ENCODE measurements at regions of chr17 and their contacts with region 1.

Region 1: GRCh38 chr17:77957857-77958715 is at the start of gene TNRC6C:
- DNase-seq: peak; percentile 100
- ATAC-seq: peak; percentile 88
- H3K4me3 Mint-ChIP-seq: peak within 1 kb of the TSS; percentile 92
- H3K27ac Mint-ChIP-seq: peak within 1 kb of the TSS; percentile 85
- H3K4me1 Mint-ChIP-seq: peaks cover 38% of the 10 kb centered on the region
- H3K27me3 Mint-ChIP-seq: peaks cover 31% of the 10 kb centered on the region
- total RNA-seq, gene TNRC6C: 33.3 to 36.2 TPM

Region 2: GRCh38 chr17:77666881-77667395 is 291.1 kb before region 1 on chr17:
- CTCF ChIA-PET with region 1: interaction called, 3 read pairs
- POLR2A ChIA-PET with region 1: interaction called, 11 read pairs
- DNase-seq: peak; percentile 93
- ATAC-seq: peak; percentile 94
- H3K4me3 Mint-ChIP-seq: peak overlapping the region; percentile 82
- H3K27ac Mint-ChIP-seq: peak overlapping the region; percentile 97
- H3K4me1 Mint-ChIP-seq: peaks cover 51% of the 10 kb centered on the region
- H3K27me3 Mint-ChIP-seq: peaks cover 4% of the 10 kb centered on the region

Region 3: GRCh38 chr17:77783991-77784820 is 173.9 kb before region 1 on chr17:
- CTCF ChIA-PET with region 1: no interaction called
- POLR2A ChIA-PET with region 1: interaction called, 11 read pairs
- DNase-seq: peak; percentile 61
- ATAC-seq: peak; percentile 91
- H3K4me3 Mint-ChIP-seq: peak overlapping the region; percentile 27
- H3K27ac Mint-ChIP-seq: peak overlapping the region; percentile 80
- H3K4me1 Mint-ChIP-seq: peaks cover 18% of the 10 kb centered on the region
- H3K27me3 Mint-ChIP-seq: peaks cover 3% of the 10 kb centered on the region

Region 4: GRCh38 chr17:77862890-77863813 is 94.9 kb before region 1 on chr17:
- CTCF ChIA-PET with region 1: no interaction called
- POLR2A ChIA-PET with region 1: no interaction called
- DNase-seq: no peak
- ATAC-seq: no peak
- H3K4me3 Mint-ChIP-seq: peak overlapping the region; percentile 12
- H3K27ac Mint-ChIP-seq: peak overlapping the region; percentile 61
- H3K4me1 Mint-ChIP-seq: peaks cover 23% of the 10 kb centered on the region
- H3K27me3 Mint-ChIP-seq: peaks cover 13% of the 10 kb centered on the region

Region 5: GRCh38 chr17:77881545-77881944 is 76.5 kb before region 1 on chr17:
- CTCF ChIA-PET with region 1: interaction called, 7 read pairs
- POLR2A ChIA-PET with region 1: interaction called, 34 read pairs
- DNase-seq: peak; percentile 90
- ATAC-seq: peak; percentile 71
- H3K4me3 Mint-ChIP-seq: peak overlapping the region; percentile 63
- H3K27ac Mint-ChIP-seq: peak overlapping the region; percentile 91
- H3K4me1 Mint-ChIP-seq: peaks cover 61% of the 10 kb centered on the region
- H3K27me3 Mint-ChIP-seq: peaks cover 10% of the 10 kb centered on the region

Region 6: GRCh38 chr17:77942112-77942988 is 15.7 kb before region 1 on chr17:
- CTCF ChIA-PET with region 1: interaction called, 5 read pairs
- POLR2A ChIA-PET with region 1: interaction called, 10 read pairs
- DNase-seq: no peak
- ATAC-seq: no peak
- H3K4me3 Mint-ChIP-seq: no peak overlapping the region
- H3K27ac Mint-ChIP-seq: no peak overlapping the region
- H3K4me1 Mint-ChIP-seq: no peaks in the 10 kb centered on the region
- H3K27me3 Mint-ChIP-seq: peaks cover 7% of the 10 kb centered on the region

Region 7: GRCh38 chr17:77968788-77969187 is 10.7 kb after region 1 on chr17:
- CTCF ChIA-PET with region 1: interaction called, 8 read pairs
- POLR2A ChIA-PET with region 1: interaction called, 11 read pairs
- DNase-seq: no peak
- ATAC-seq: no peak
- H3K4me3 Mint-ChIP-seq: no peak overlapping the region
- H3K27ac Mint-ChIP-seq: no peak overlapping the region
- H3K4me1 Mint-ChIP-seq: peaks cover 23% of the 10 kb centered on the region
- H3K27me3 Mint-ChIP-seq: no peaks in the 10 kb centered on the region

Measured in activated CD8-positive, alpha-beta T cell treated with anti-CD3 and anti-CD28 coated beads, Interleukin-2, amount 10 ng/mL, durations not matched to agents 7 days and 5 days (primary cell).